Calu3 (cell line): ENCODE measurements at regions of chr2 and their contacts with region 1.

Region 1: GRCh38 chr2:157194097-157194688 is 63.3 kb upstream of the GALNT5 start:
- DNase-seq: peak; percentile 28
- H3K4me3 Mint-ChIP-seq: no peak overlapping the region
- H3K27ac Mint-ChIP-seq: peak overlapping the region; percentile 77
- H3K4me1 Mint-ChIP-seq: peaks cover 16% of the 10 kb centered on the region
- H3K27me3 Mint-ChIP-seq: no peaks in the 10 kb centered on the region
- CTCF ChIP-seq: peak; percentile 41

Region 2: DNA sequence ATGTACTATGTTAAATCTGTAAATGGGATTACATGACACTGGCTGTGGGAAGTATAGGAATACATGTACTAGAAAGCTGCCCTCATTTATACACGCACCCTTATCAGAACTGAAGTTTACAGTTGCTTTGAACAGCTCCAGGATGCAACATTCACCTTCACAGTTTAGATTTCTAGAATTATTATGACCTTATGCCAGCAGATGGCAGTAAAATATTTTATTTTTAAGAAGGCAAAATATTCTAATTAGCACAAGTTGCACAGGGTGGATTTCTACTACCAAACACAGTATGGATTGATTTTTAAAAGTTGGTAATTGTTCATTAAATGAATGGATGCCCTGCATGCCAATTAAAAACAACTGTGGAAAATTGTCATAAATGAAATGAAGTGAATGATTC is 1825.3 kb before region 1 on chr2:
- CTCF ChIA-PET with region 1: no interaction called
- intact Hi-C with region 1: loop called (anchors 2 kb)
- DNase-seq: no peak
- H3K4me3 Mint-ChIP-seq: no peak overlapping the region
- H3K27ac Mint-ChIP-seq: no peak overlapping the region
- H3K4me1 Mint-ChIP-seq: no peaks in the 10 kb centered on the region
- H3K27me3 Mint-ChIP-seq: no peaks in the 10 kb centered on the region
- CTCF ChIP-seq: no peak

Region 3: GRCh38 chr2:156589381-156590079 is 604.7 kb before region 1 on chr2:
- CTCF ChIA-PET with region 1: interaction called, 3 read pairs
- intact Hi-C with region 1: loop called (anchors 5 kb)
- DNase-seq: peak; percentile 6
- H3K4me3 Mint-ChIP-seq: no peak overlapping the region
- H3K27ac Mint-ChIP-seq: no peak overlapping the region
- H3K4me1 Mint-ChIP-seq: no peaks in the 10 kb centered on the region
- H3K27me3 Mint-ChIP-seq: no peaks in the 10 kb centered on the region
- CTCF ChIP-seq: peak; percentile 28

Region 4: GRCh38 chr2:156892467-156893281 is 301.5 kb before region 1 on chr2:
- CTCF ChIA-PET with region 1: no interaction called
- intact Hi-C with region 1: loop called (anchors 1 kb)
- DNase-seq: peak; percentile 23
- H3K4me3 Mint-ChIP-seq: peak overlapping the region; percentile 67
- H3K27ac Mint-ChIP-seq: peak overlapping the region; percentile 29
- H3K4me1 Mint-ChIP-seq: peaks cover 20% of the 10 kb centered on the region
- H3K27me3 Mint-ChIP-seq: no peaks in the 10 kb centered on the region
- CTCF ChIP-seq: peak; percentile 18

Region 5: GRCh38 chr2:156908825-156909224 is 285.4 kb before region 1 on chr2:
- CTCF ChIA-PET with region 1: no interaction called
- intact Hi-C with region 1: loop called (anchors 5 kb)
- DNase-seq: no peak
- H3K4me3 Mint-ChIP-seq: no peak overlapping the region
- H3K27ac Mint-ChIP-seq: no peak overlapping the region
- H3K4me1 Mint-ChIP-seq: peaks cover 17% of the 10 kb centered on the region
- H3K27me3 Mint-ChIP-seq: no peaks in the 10 kb centered on the region
- CTCF ChIP-seq: no peak

Region 6: DNA sequence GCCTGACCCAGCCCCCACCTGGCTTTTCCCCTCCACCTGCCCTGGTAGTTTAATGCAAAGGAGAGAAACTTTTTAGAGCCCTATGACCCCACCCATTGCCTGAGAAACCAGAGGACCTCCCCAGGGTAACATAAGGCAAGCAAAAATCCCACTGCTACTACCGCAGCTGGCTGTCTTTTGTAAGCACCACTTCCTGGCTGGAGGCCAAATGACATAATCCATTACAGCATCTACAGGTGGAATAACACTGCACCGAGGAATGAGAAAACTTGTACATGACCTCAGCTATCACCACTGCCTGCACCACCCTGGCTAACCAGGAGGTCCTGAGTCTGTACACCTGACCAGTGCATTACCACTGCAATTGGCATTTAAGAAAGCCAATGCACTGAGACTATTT is 86.3 kb before region 1 on chr2:
- CTCF ChIA-PET with region 1: no interaction called
- intact Hi-C with region 1: loop called (anchors 5 kb)
- DNase-seq: peak; percentile 82
- H3K4me3 Mint-ChIP-seq: no peak overlapping the region
- H3K27ac Mint-ChIP-seq: peak overlapping the region; percentile 38
- H3K4me1 Mint-ChIP-seq: peaks cover 20% of the 10 kb centered on the region
- H3K27me3 Mint-ChIP-seq: no peaks in the 10 kb centered on the region
- CTCF ChIP-seq: no peak

Region 7: DNA sequence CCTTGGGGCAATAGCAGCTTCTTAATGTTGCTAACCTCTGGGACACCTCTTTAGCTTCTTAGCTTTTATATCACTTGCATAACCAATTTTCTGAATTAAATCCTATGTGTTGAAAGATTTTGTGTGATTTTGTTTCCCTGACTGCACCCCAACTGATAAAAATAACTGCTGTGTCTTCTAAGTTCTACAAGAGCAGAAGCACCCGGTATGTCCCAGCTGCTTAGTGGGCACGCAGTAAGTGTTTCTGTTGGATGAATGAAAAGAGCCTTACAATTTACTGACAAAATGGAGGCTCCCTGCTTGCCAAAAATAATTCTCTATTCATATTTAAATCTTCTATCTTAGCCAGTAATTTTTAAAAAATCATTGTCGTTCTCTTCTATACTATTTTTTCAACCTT is 10.2 kb after region 1 on chr2:
- CTCF ChIA-PET with region 1: no interaction called
- intact Hi-C with region 1: no loop called
- DNase-seq: no peak
- H3K4me3 Mint-ChIP-seq: no peak overlapping the region
- H3K27ac Mint-ChIP-seq: no peak overlapping the region
- H3K4me1 Mint-ChIP-seq: no peaks in the 10 kb centered on the region
- H3K27me3 Mint-ChIP-seq: no peaks in the 10 kb centered on the region
- CTCF ChIP-seq: no peak

Region 8: GRCh38 chr2:157312866-157313486 is 118.8 kb after region 1 on chr2:
- CTCF ChIA-PET with region 1: no interaction called
- intact Hi-C with region 1: no loop called
- DNase-seq: no peak
- H3K4me3 Mint-ChIP-seq: no peak overlapping the region
- H3K27ac Mint-ChIP-seq: no peak overlapping the region
- H3K4me1 Mint-ChIP-seq: no peaks in the 10 kb centered on the region
- H3K27me3 Mint-ChIP-seq: no peaks in the 10 kb centered on the region
- CTCF ChIP-seq: no peak